ENCODE measurements at regions of chr17 and their contacts with region 1.

Region 1: DNA sequence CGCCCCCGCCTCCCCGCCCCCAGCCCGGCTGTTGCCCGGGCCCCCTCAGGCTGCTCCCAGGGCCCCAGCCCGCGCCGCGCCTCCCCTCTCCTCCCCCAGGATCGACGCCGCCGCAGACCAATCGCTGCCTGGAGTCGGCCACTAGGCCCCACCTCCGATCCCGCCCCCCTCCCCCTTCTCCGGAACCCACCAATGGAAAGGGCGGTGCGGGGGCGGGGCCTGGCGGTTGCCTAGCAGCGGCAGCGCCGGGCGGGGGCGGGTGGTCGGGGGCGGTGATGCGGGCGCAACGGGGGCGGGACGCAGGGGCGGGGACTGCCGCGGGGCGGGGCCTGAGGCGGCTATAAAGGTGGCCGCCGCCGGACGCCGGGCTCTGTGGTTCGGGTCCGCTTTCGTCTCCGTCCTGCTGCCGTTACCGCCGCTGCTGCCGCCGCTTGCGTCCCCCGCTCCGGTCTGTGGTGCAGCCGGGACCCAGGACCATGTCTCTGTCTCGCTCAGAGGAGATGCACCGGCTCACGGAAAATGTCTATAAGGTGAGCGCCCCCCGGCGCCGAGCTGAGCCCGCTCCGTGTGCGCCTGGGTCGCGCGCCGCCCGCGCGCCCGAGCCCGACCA is at the start of gene BAIAP2:
- DNase-seq: peak; percentile 97 to 99 (median 98)
- H3K4me3 ChIP-seq: peak within 1 kb of the TSS; percentile 63
- H3K27ac ChIP-seq: no peak within 1 kb of the TSS
- H3K4me1 ChIP-seq: peaks cover 27% of the 10 kb centered on the region
- H3K27me3 ChIP-seq: no peaks in the 10 kb centered on the region
- CTCF ChIP-seq: peak in 2 of 3 donors; percentile 11 to 12
- EP300 ChIP-seq: no peak
- POLR2A ChIP-seq: peak; percentile 91
- total RNA-seq, gene BAIAP2: 13.8 to 80.6 (median 30.1) TPM

Region 2: GRCh38 chr17:80981062-80981902 is 53.6 kb before region 1 on chr17:
- intact Hi-C with region 1: loop called in 1 of 4 experiments (anchors 5 kb)
- DNase-seq: peak in 2 of 5 donors; percentile 31 to 63
- H3K4me3 ChIP-seq: no peak overlapping the region
- H3K27ac ChIP-seq: no peak overlapping the region
- H3K4me1 ChIP-seq: no peaks in the 10 kb centered on the region
- H3K27me3 ChIP-seq: no peaks in the 10 kb centered on the region
- CTCF ChIP-seq: peak; percentile 78 to 92 (median 88)
- EP300 ChIP-seq: no peak
- POLR2A ChIP-seq: no peak

Region 3: DNA sequence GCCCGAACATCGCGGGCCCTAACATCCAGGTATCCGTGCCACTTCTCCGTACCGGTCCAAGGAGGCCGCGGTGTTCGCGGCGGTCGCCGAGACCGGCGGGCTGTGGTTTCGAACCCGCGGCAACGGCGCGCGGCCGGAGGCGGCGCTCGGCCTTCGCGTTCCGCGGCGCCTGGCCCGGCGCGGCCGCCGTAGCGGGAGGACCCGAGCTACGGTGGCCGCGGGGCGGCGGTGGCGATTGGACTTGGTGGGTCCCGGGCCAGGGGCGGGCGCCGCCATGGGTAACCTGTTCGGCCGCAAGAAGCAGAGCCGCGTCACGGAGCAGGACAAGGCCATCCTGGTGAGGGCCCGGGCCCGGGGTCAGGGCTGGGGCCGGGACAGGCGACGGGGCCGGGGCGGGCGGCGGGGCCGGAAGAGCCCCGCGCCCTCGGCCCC is 43.2 kb before region 1 on chr17 and contains the start of gene CHMP6:
- intact Hi-C with region 1: loop called in 2 of 4 experiments (anchors 5 kb)
- DNase-seq: peak; percentile 71 to 88 (median 82)
- H3K4me3 ChIP-seq: peak within 1 kb of the TSS; percentile 84
- H3K27ac ChIP-seq: peak within 1 kb of the TSS; percentile 67 to 85
- H3K4me1 ChIP-seq: peaks cover 6% of the 10 kb centered on the region
- H3K27me3 ChIP-seq: no peaks in the 10 kb centered on the region
- CTCF ChIP-seq: peak in 2 of 3 donors; percentile 78 to 83
- EP300 ChIP-seq: no peak
- POLR2A ChIP-seq: no peak
- total RNA-seq, gene CHMP6: 18.5 to 29.7 (median 26.5) TPM

Region 4: DNA sequence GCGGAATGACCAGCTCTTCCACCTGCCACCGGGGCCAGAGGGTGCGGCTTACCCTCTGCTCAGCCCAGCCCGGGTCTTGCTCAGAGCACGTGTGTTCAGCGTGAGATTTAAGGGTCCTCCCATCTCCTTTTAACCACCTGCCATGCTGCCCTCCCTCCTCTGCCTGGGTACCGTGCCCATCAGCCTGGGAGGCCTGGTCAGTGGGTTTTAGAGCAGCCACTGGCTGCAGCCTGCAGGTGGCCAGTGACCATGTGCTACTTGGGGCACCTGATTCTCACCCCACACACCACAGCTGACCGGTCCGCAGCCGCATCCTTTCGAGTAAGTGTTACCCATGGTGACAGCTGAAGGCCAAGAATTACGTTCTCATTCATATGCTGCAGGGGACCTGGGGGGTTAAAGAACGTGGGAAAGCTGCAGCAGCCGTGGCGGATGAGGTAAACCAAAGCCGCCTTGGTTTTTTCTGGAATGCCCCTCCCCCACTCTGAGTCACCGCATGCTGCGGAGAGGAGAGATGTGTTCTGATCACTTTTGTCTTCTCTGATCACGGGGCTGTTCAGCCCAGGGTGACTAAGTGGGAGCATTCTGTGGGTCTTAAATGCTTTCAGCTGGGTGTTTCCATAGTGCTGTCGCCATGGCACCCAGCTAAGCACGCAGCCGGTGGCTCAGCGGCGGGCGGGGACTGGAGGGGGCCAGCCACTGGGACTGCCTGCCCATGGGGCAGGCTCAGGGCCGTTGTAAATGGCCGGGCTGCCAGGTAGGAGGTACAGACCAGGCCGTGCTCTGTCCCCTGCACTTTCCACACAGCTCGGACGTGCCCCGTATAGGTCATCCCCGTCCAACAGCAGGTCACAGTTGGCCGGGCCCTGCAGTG is 59.9 kb after region 1 on chr17:
- intact Hi-C with region 1: loop called in 1 of 4 experiments (anchors 5 kb)
- DNase-seq: peak; percentile 78 to 85 (median 81)
- H3K4me3 ChIP-seq: no peak overlapping the region
- H3K27ac ChIP-seq: peak overlapping the region; percentile 2 to 81
- H3K4me1 ChIP-seq: peaks cover 10% of the 10 kb centered on the region
- H3K27me3 ChIP-seq: no peaks in the 10 kb centered on the region
- CTCF ChIP-seq: no peak
- EP300 ChIP-seq: no peak
- POLR2A ChIP-seq: no peak

Region 5: GRCh38 chr17:81101614-81102306 is 66.9 kb after region 1 on chr17:
- intact Hi-C with region 1: loop called in 2 of 4 experiments (anchors 5 kb)
- DNase-seq: peak; percentile 60 to 86 (median 78)
- H3K4me3 ChIP-seq: no peak overlapping the region
- H3K27ac ChIP-seq: no peak overlapping the region
- H3K4me1 ChIP-seq: peaks cover 5% of the 10 kb centered on the region
- H3K27me3 ChIP-seq: no peaks in the 10 kb centered on the region
- CTCF ChIP-seq: peak; percentile 97 to 98 (median 97)
- EP300 ChIP-seq: no peak
- POLR2A ChIP-seq: no peak